Vagina (tissue), 2 donors: ENCODE measurements at regions of chr1 and their contacts with region 1.

Region 1: DNA sequence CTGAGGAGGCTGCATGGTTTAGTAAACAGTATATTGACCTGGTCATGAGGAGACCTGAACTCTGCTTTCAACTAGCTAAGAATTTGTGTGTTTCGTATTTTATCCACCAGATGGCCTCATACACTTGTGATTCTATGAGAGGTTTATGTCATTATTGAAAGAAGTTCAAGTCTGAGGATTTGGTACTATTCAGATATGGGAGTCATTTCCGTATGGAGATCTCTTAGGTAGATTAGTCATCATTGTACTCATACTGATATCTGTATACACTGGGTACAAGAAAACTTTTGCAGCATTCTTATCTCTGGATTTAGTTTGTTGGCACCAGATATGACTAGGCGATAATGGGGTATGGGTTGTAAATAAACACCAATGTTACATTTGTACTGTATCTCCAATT is 26.6 kb downstream of the ATF6 start:
- DNase-seq: no peak
- H3K4me3 ChIP-seq: no peak overlapping the region
- H3K27ac ChIP-seq: no peak overlapping the region
- H3K4me1 ChIP-seq: no peaks in the 10 kb centered on the region
- H3K27me3 ChIP-seq: no peaks in the 10 kb centered on the region
- CTCF ChIP-seq: peak in 2 of 3 experiments; percentile 23 to 63
- POLR2A ChIP-seq: no peak

Region 2: DNA sequence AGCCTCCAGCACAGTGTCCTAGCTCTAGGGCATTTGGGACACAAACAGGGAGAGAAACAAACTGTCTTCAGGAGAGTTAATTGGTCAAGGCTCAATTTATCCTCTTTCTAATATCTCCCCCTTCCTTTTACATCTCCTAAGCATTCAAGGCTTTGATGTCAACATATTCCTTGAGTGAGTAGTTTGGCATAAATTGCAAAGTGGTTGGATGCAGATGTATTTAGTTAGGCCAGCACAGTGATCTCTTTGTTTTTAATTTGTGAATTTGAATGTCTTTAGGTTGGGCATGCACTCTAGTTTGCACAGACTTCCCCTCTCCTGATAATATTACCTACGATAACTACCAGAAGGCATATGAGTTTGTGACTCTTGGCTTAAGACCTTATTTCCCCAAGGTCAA is 243.4 kb after region 1 on chr1:
- intact Hi-C with region 1: loop called (anchors 2 kb)
- DNase-seq: no peak
- H3K4me3 ChIP-seq: no peak overlapping the region
- H3K27ac ChIP-seq: no peak overlapping the region
- H3K4me1 ChIP-seq: no peaks in the 10 kb centered on the region
- H3K27me3 ChIP-seq: no peaks in the 10 kb centered on the region
- CTCF ChIP-seq: no peak
- POLR2A ChIP-seq: no peak

Region 3: GRCh38 chr1:162177126-162177525 is 384.4 kb after region 1 on chr1:
- intact Hi-C with region 1: no loop called
- DNase-seq: no peak
- H3K4me3 ChIP-seq: no peak overlapping the region
- H3K27ac ChIP-seq: no peak overlapping the region
- H3K4me1 ChIP-seq: no peaks in the 10 kb centered on the region
- H3K27me3 ChIP-seq: no peaks in the 10 kb centered on the region
- CTCF ChIP-seq: no peak
- POLR2A ChIP-seq: no peak